Activated CD8-positive, alpha-beta T cell treated with anti-CD3 and anti-CD28 coated beads for 36 hours (primary cell): ENCODE measurements at regions of chr18 and their contacts with region 1.

Region 1: GRCh38 chr18:50356036-50356945 is 18.6 kb upstream of the SKA1 start:
- DNase-seq: peak; percentile 36
- ATAC-seq: peak; percentile 77
- H3K4me3 Mint-ChIP-seq: no peak overlapping the region
- H3K27ac Mint-ChIP-seq: no peak overlapping the region
- H3K4me1 Mint-ChIP-seq: peaks cover 9% of the 10 kb centered on the region
- H3K27me3 Mint-ChIP-seq: peaks cover 18% of the 10 kb centered on the region
- CTCF ChIP-seq: peak; percentile 30

Region 2: DNA sequence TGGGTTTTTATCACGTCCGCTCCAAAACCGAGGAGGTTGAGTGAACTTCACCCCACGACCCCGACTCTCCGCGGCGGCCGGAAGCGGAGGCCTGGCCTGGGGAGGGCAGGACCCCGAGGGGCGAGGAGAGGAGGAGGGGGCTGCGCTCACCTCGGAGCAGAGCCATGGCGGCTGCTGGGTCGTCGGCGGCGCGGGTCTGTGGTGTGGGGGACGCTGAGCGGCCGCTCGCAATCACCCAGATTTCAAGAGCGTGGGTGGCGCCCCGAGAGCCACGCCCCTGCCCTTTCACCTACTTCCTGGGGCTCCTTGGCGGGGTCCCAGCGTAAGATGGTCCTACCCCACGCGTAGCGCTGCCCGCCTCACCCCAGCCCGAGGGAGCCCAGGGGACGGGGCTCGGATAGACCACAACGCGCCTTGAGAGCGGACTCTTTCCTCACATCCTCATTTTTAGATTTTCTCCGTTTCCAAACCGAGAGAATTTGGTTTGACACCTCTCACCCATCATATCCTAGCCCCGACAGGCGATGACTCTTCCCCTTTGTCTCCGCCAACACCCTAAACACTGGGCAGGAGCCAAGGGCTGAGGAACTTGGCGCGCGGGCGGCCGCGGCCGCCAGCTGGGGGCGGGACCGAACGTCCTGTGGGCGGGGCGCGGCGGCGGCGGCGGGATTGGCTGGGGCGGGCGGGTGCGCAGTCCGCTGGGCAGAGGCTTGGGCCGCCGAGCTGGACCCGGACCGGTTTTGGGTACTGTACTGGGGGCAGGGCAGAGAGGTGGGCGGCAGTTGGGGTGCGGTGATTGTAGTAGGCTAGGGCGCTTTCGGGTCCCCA is 542.8 kb before region 1 on chr18 and contains the start of gene ACAA2:
- CTCF ChIA-PET with region 1: no interaction called
- POLR2A ChIA-PET with region 1: no interaction called
- intact Hi-C with region 1: no loop called
- DNase-seq: peak; percentile 88
- ATAC-seq: peak; percentile 90
- H3K4me3 Mint-ChIP-seq: peak within 1 kb of the TSS; percentile 97
- H3K27ac Mint-ChIP-seq: peak within 1 kb of the TSS; percentile 100
- H3K4me1 Mint-ChIP-seq: peaks cover 47% of the 10 kb centered on the region
- H3K27me3 Mint-ChIP-seq: no peaks in the 10 kb centered on the region
- CTCF ChIP-seq: no peak
- total RNA-seq, gene ACAA2: 83.3 to 84.6 TPM

Region 3: GRCh38 chr18:50194631-50195532 is 161.4 kb before region 1 on chr18 and contains the start of gene MYO5B:
- CTCF ChIA-PET with region 1: interaction called, 10 read pairs
- POLR2A ChIA-PET with region 1: no interaction called
- intact Hi-C with region 1: no loop called
- DNase-seq: peak; percentile 72
- ATAC-seq: peak; percentile 94
- H3K4me3 Mint-ChIP-seq: peak within 1 kb of the TSS; percentile 31
- H3K27ac Mint-ChIP-seq: no peak within 1 kb of the TSS
- H3K4me1 Mint-ChIP-seq: peaks cover 14% of the 10 kb centered on the region
- H3K27me3 Mint-ChIP-seq: peaks cover 68% of the 10 kb centered on the region
- CTCF ChIP-seq: peak; percentile 60
- total RNA-seq, gene MYO5B: 0.09 TPM in 1 of 2 experiments, not detected in the other

Region 4: GRCh38 chr18:50266248-50266704 is 90.0 kb before region 1 on chr18 and contains the start of gene CFAP53:
- CTCF ChIA-PET with region 1: interaction called, 23 read pairs
- POLR2A ChIA-PET with region 1: no interaction called
- intact Hi-C with region 1: no loop called
- DNase-seq: peak; percentile 95
- ATAC-seq: peak; percentile 91
- H3K4me3 Mint-ChIP-seq: peak within 1 kb of the TSS; percentile 70
- H3K27ac Mint-ChIP-seq: peak within 1 kb of the TSS; percentile 79
- H3K4me1 Mint-ChIP-seq: peaks cover 27% of the 10 kb centered on the region
- H3K27me3 Mint-ChIP-seq: no peaks in the 10 kb centered on the region
- CTCF ChIP-seq: no peak
- total RNA-seq, gene CFAP53: 0.27 to 0.76 TPM

Region 5: DNA sequence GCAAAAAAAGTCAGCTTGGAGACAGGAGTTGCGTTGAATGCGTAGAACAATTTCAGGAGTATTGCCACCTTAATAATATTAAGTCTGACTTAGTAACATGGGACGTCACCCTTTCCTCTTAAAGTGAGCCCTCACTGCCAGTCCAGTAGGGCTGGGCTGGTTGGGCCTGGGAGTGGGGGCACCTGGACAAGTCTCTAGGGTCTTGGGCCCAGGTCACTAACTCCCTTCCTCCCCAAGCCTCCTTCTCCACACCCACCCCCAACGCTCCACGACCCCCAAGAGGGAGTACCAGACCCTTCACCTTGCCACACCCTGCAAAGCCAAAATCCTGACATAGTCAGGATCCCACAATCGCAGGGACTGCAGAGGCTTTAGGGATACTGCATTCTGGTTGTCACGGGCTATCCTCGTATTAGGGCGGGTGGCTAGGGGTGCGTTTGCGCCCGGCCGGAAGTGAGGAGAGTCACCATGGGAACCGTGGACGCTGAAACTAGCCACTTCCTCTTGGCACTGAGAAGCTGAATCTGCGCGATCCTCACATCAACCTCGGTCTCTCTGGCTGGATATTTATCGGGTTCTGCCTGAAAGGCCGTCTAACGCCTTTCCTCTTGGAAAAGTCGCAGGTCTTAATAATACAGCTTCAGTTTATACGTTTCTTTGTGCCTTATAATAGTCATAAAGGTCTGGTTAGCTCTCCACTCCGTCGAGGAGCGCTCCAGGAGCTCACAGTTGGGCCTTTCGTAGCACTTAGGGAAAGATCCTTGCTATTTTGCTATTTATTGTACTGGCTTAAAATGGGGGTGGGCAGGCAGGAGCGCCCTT is 58.5 kb before region 1 on chr18:
- CTCF ChIA-PET with region 1: interaction called, 15 read pairs
- POLR2A ChIA-PET with region 1: no interaction called
- intact Hi-C with region 1: no loop called
- DNase-seq: peak; percentile 91
- ATAC-seq: peak; percentile 100
- H3K4me3 Mint-ChIP-seq: peak overlapping the region; percentile 69
- H3K27ac Mint-ChIP-seq: no peak overlapping the region
- H3K4me1 Mint-ChIP-seq: peaks cover 7% of the 10 kb centered on the region
- H3K27me3 Mint-ChIP-seq: peaks cover 21% of the 10 kb centered on the region
- CTCF ChIP-seq: no peak

Region 6: DNA sequence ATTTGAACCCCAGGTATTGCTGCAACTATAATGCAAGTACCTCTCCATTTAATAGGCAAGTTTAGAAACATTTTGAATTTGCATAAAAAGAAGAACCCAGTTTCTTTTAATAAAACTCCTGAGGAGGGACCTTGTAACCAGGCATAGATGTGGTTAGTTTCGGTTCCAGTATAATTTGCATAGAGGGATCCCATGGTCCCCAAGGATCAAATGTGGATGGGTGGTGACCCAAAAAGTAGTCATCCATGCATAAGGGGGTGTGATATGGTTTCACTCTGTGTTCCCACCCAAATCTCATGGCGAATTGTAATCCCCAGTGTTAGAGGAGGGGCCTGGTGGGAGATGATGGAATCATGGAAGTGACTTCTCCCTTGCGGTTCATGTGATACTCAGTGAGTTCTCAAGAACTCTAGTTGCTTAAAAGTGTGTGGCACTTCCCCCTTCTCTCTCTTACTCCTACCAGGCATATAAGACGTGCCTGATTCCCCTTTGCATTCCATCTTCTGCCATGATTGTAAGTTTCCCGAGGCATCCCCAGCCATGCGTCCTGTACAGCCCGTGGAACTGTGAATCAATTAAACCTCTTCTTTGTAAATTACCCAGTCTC is 21.6 kb before region 1 on chr18:
- CTCF ChIA-PET with region 1: interaction called, 18 read pairs
- POLR2A ChIA-PET with region 1: no interaction called
- intact Hi-C with region 1: no loop called
- DNase-seq: no peak
- ATAC-seq: no peak
- H3K4me3 Mint-ChIP-seq: no peak overlapping the region
- H3K27ac Mint-ChIP-seq: no peak overlapping the region
- H3K4me1 Mint-ChIP-seq: no peaks in the 10 kb centered on the region
- H3K27me3 Mint-ChIP-seq: peaks cover 4% of the 10 kb centered on the region
- CTCF ChIP-seq: no peak

Region 7: DNA sequence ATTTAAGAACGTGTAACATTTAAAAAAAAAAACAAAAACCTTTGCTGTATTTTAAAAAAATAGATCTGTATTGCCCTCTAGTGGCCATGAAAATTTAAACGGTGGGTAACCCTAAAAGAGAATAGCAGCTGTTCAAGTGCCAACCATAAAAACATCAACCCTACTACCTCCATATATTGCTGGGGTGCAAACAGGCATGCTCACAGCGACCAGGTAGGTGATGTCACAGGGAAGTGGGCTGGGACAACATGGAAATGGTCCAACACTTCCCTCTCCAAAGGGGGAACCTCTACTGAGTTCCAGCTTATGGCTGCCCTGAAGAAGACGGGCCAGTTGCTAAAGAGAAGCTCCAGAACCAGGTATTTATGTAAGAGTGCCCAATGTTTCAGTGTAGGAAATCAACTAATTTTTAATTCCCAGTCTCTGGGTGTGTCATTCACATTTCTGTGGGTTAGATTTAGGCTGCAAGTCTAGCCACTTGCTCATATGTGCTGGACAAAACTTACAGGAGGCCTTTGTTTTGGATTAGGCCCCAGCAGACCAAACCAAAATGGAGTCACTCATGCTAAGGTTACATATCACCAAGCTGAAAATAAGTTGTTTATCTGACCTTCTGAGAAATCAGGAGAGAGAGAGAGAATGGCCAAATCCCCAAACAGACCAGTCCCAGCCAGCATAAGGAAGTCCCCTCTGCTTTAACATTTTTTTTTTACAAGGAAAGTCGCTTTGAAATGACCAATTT is 73.1 kb after region 1 on chr18:
- CTCF ChIA-PET with region 1: interaction called, 15 read pairs
- POLR2A ChIA-PET with region 1: no interaction called
- intact Hi-C with region 1: no loop called
- DNase-seq: no peak
- ATAC-seq: no peak
- H3K4me3 Mint-ChIP-seq: no peak overlapping the region
- H3K27ac Mint-ChIP-seq: no peak overlapping the region
- H3K4me1 Mint-ChIP-seq: no peaks in the 10 kb centered on the region
- H3K27me3 Mint-ChIP-seq: peaks cover 13% of the 10 kb centered on the region
- CTCF ChIP-seq: peak; percentile 73